Activated CD8-positive, alpha-beta T cell treated with anti-CD3 and anti-CD28 coated beads, Interleukin-2, amount 10 ng/mL, durations not matched to agents 7 days and 5 days (primary cell): ENCODE measurements at regions of chr1 and their contacts with region 1.

Region 1: DNA sequence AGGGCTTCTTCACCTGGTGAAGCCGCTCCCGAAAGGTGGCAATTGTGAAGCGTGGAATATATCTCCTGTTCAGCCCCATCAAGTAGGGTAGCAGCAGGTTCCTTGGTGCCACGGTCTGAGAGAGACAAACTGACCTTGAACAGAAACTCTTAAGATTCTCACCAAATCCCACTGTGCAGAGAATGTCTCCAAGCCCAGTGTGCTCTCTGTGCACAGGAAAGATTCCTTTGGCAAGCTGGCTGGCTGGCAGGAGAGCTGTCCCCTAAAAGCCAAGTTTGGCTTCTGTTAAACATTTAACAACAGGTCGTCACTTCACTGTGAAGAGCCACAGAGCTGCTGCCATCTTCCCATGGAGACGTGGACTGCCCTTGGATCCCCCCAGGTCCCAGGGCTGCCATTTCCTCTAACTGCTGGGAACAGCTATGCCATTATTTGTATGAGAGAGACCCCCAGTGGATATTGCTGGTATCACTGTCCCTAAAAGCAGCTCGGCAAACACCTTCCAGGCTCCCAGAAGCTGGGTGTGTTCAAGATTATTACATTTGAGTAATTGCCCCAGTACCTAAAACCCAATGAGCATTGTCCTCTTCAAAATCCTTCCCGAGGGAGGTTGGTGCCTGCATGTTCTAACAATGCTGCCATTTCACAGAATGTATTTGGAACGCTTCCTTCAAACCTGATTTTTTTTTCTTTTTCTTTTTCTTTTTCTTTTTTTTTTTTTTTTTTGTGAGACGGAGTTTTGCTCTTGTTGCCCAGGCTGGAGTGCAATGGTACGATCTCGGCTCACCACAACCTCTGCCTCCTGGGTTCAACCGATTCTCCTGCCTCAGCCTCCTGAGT is 71.8 kb downstream of the CD58 start:
- DNase-seq: peak; percentile 69
- ATAC-seq: peak; percentile 71
- H3K4me3 Mint-ChIP-seq: no peak overlapping the region
- H3K27ac Mint-ChIP-seq: no peak overlapping the region
- H3K4me1 Mint-ChIP-seq: peaks cover 52% of the 10 kb centered on the region
- H3K27me3 Mint-ChIP-seq: no peaks in the 10 kb centered on the region

Region 2: GRCh38 chr1:116151739-116152576 is 347.1 kb before region 1 on chr1:
- CTCF ChIA-PET with region 1: interaction called, 429 read pairs
- POLR2A ChIA-PET with region 1: no interaction called
- DNase-seq: peak; percentile 77
- ATAC-seq: peak; percentile 97
- H3K4me3 Mint-ChIP-seq: peak overlapping the region; percentile 60
- H3K27ac Mint-ChIP-seq: peak overlapping the region; percentile 70
- H3K4me1 Mint-ChIP-seq: peaks cover 19% of the 10 kb centered on the region
- H3K27me3 Mint-ChIP-seq: peaks cover 19% of the 10 kb centered on the region

Region 3: DNA sequence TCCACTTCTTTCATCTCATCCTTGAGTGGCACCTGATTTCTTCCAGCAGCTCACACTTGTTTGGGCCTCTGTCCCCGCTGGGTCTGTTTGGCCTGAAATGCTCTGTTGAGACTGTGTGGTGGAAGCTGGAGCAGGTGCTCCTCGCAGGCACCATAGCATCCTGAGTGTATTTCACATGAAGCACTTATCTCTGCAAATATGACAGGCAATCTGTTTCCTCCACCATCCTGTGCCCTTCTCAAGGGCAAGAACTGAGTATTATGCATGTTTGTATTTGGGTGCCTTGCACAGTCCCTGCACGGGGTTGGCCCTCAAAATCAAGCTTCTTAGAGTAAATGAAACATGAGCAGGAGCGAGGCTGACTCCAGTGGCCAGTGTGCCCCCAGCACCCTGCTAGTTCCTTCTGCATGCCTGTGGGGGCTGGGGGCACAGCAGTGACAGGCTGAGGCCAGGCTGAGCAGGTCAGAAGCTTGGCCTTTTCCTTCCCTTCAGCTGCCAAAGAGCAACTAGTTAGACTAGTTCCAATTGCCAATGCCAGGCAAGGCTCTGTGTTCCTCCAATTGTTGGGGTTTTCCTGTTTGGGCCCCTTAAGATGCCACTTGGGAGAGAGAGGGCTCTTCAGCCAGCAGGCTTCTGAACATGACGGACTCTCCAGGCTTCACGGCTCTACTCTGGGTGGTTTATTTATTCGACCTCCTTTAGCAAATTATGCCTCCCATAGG is 255.5 kb before region 1 on chr1:
- CTCF ChIA-PET with region 1: no interaction called
- POLR2A ChIA-PET with region 1: no interaction called
- DNase-seq: no peak
- ATAC-seq: no peak
- H3K4me3 Mint-ChIP-seq: no peak overlapping the region
- H3K27ac Mint-ChIP-seq: no peak overlapping the region
- H3K4me1 Mint-ChIP-seq: no peaks in the 10 kb centered on the region
- H3K27me3 Mint-ChIP-seq: no peaks in the 10 kb centered on the region

Region 4: GRCh38 chr1:116377541-116378529 is 121.2 kb before region 1 on chr1:
- CTCF ChIA-PET with region 1: interaction called, 18 read pairs
- POLR2A ChIA-PET with region 1: interaction called, 5 read pairs
- DNase-seq: peak; percentile 57
- ATAC-seq: peak; percentile 52
- H3K4me3 Mint-ChIP-seq: peak overlapping the region; percentile 92
- H3K27ac Mint-ChIP-seq: peak overlapping the region; percentile 94
- H3K4me1 Mint-ChIP-seq: peaks cover 74% of the 10 kb centered on the region
- H3K27me3 Mint-ChIP-seq: no peaks in the 10 kb centered on the region

Region 5: GRCh38 chr1:116403496-116404136 is 95.4 kb before region 1 on chr1:
- CTCF ChIA-PET with region 1: interaction called, 11 read pairs
- POLR2A ChIA-PET with region 1: no interaction called
- DNase-seq: no peak
- ATAC-seq: no peak
- H3K4me3 Mint-ChIP-seq: no peak overlapping the region
- H3K27ac Mint-ChIP-seq: no peak overlapping the region
- H3K4me1 Mint-ChIP-seq: peaks cover 23% of the 10 kb centered on the region
- H3K27me3 Mint-ChIP-seq: no peaks in the 10 kb centered on the region

Region 6: DNA sequence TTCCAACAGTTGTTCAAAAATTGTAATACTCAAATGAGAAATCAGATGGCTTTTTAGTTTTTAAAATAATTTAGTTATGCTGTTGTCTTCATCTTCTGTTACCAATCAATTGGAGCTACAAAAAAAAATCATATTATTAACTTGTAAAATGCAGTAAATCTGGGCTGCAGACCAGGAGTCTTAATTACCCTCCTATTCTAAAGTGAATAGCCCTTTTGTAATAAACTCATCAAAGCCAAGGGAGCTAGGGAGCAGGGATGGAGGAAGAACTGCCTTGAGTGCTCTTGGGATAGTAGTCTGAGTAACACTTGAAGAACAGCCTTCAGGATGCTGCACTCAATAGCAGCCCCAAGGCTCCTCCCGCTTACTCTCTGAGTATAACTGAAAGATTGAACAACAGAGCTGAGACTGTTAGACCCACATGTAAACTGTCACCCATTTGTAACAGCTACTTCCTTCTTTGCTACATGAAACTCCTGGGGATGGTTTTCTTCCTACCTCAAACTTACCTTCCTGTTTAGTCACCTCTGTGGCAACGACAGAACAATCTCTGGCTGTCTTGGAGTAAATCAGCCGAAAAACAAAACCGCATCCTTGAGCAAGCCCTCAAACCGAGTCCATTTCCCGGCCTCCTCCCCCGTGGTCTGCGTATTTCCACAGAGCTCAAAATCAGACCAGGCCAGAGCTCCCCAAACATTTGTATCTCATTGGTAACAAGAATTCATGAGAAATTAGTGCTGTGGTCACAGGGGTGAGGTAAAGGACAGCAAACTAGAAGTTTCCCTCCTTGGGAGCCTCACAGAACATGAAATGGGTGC is 15.9 kb after region 1 on chr1:
- CTCF ChIA-PET with region 1: interaction called, 61 read pairs
- POLR2A ChIA-PET with region 1: interaction called, 23 read pairs
- DNase-seq: peak; percentile 76
- ATAC-seq: peak; percentile 84
- H3K4me3 Mint-ChIP-seq: peak overlapping the region; percentile 57
- H3K27ac Mint-ChIP-seq: peak overlapping the region; percentile 89
- H3K4me1 Mint-ChIP-seq: peaks cover 78% of the 10 kb centered on the region
- H3K27me3 Mint-ChIP-seq: no peaks in the 10 kb centered on the region

Region 7: DNA sequence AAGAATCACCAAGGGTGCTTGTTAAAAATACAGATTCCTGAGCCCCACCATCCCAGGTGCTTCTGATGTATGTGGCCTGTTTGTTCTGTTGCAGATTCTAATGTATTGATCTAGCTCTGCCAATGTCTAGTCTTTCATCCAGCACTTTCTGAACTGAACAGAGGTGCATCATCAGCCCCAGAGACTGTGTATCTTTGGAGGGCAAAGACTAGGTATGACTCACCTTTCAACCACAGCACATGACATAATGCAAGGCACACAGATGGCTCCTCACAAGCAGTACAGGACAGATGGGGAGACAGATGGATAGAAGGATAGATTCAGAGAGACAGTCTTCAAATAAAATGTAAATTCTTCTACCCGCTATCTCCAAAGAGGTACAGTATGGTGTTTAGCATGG is 39.5 kb after region 1 on chr1:
- CTCF ChIA-PET with region 1: interaction called, 15 read pairs
- POLR2A ChIA-PET with region 1: interaction called, 5 read pairs
- DNase-seq: peak; percentile 62
- ATAC-seq: peak; percentile 96
- H3K4me3 Mint-ChIP-seq: no peak overlapping the region
- H3K27ac Mint-ChIP-seq: peak overlapping the region; percentile 48
- H3K4me1 Mint-ChIP-seq: peaks cover 37% of the 10 kb centered on the region
- H3K27me3 Mint-ChIP-seq: no peaks in the 10 kb centered on the region

Region 8: DNA sequence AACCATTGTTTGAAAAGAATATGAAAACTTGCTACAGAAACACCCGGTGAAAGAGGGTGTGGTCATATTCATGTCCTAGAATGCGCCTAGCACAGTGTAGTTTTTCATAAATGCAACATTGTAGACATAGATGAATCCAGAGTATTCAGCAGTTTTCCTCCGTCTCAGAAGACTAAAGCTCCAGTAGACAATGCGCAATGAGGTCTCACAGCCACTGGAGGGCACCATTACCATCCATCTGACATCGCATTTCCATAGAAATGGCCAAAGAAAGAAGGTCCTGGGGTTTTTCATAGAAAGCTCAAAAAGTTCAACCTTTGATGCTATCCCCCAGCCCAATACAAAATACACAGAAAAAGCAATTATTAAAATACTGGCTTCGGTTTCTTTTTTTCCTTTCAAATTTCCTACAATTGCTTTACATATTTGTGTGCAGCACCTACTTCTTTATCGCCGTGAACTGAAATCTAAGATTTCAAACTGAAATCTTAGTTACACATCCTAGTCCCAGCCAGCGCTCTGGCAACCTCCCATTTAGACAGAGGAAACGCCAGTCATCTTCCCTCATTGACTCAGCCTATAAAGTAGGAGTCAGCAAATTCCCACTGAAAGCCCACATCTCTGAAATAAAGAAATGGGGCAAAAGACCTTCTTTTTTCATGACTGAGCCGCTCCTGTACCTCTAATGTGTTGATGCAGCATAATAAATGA is 75.7 kb after region 1 on chr1:
- CTCF ChIA-PET with region 1: interaction called, 12 read pairs
- POLR2A ChIA-PET with region 1: no interaction called
- DNase-seq: peak; percentile 75
- ATAC-seq: no peak
- H3K4me3 Mint-ChIP-seq: no peak overlapping the region
- H3K27ac Mint-ChIP-seq: no peak overlapping the region
- H3K4me1 Mint-ChIP-seq: peaks cover 31% of the 10 kb centered on the region
- H3K27me3 Mint-ChIP-seq: peaks cover 5% of the 10 kb centered on the region